ENCODE measurements at regions of chr1 and their contacts with region 1.

Region 1: GRCh38 chr1:92749024-92749634 is 35.8 kb downstream of the EVI5 start:
- DNase-seq: no peak
- ATAC-seq: peak; percentile 48

Region 2: GRCh38 chr1:92784639-92785500 is 35.7 kb after region 1 on chr1 and contains the start of gene EVI5:
- intact Hi-C with region 1: loop called (anchors 5 kb)
- DNase-seq: peak; percentile 98
- ATAC-seq: peak; percentile 99
- total RNA-seq, gene EVI5: 20.0 TPM

Region 3: GRCh38 chr1:92817986-92818764 is 69.0 kb after region 1 on chr1:
- intact Hi-C with region 1: loop called (anchors 1 kb)
- DNase-seq: no peak
- ATAC-seq: no peak

Region 4: DNA sequence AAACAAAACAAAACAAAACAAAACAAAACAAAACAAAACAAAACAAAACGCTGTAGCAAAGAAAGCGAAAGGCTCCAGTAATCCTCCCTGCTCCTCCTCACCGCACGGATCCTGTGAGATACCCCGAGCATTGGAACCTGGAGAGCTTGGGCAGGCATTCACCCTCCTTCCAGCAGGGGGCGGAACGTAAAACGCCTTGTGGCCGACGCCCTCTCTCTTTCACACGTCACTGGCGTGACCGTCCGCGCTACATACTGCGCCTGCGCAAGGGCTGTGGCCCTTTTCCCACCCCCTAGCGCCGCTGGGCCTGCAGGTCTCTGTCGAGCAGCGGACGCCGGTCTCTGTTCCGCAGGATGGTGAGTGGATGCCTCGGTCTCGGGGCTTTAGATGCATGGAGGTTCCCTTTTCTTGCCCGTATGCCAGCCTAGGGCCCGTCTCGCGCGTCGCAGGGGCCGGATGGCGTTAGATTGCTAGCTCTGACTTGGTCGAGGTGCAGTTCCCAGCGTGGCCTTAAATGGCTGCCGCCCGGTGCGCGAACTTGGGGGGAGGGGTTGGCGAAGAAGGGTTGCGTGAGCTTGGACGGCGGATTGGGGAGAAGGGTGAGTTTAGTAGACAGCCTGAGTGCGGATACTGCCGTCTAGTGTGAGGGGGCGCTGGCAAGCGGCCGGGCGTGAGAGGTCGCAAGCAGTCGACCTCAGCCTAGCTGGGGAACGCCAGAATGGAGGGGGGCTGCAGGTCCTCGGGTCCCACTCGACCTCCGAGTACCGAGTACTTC is 82.8 kb after region 1 on chr1 and contains the start of gene RPL5:
- intact Hi-C with region 1: loop called (anchors 5 kb)
- DNase-seq: peak; percentile 97
- ATAC-seq: peak; percentile 98
- total RNA-seq, gene RPL5: 601 TPM

Measured in Right ventricle myocardium inferior (tissue), 1 donor.